ENCODE measurements at regions of chr10 and their contacts with region 1.

Region 1: GRCh38 chr10:62437696-62438095 is 63.5 kb downstream of the ZNF365 start:
- DNase-seq: no peak
- ATAC-seq: no peak
- H3K4me3 Mint-ChIP-seq: no peak overlapping the region
- H3K27ac Mint-ChIP-seq: no peak overlapping the region
- H3K4me1 Mint-ChIP-seq: peaks cover 19% of the 10 kb centered on the region
- H3K27me3 Mint-ChIP-seq: peaks cover 20% of the 10 kb centered on the region

Region 2: DNA sequence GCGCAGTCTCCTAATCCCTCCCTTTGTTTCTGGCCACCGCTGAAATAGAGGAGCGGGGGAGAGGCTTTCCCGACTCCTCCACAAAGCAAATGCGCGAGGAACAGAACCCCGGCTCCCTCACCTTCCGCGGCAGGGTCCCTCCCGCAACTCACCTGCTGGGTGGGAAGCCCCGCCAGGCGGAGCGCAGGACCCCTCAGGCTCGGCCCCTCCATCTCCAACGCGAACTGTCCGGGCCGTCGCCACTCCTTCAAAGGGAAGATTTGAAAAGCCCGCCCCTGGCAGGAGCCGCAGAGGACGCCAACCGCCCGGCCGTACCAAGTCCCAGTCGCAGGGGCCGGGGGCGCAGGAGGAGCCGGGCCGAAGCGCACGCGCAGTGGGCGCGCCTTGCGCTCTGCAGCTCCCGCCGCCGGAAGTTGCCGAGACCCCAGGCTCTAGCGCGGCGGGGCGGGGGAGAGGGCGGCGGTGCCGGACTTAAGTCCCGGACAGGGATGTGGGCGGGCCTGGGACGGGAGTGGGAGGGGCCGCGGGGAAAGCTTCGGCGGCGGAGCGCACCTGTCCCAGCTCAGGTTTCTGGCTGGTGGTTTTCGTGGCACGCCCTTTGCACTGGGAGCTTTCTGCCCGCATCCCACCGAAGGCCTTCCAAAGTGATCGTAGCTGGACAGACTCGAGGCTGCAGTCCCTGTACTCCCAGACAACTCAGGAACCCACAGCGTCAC is 169.1 kb before region 1 on chr10 and contains the start of gene RTKN2:
- CTCF ChIA-PET with region 1: interaction called, 8 read pairs
- POLR2A ChIA-PET with region 1: no interaction called
- intact Hi-C with region 1: loop called in 1 of 2 experiments (anchors 1 kb)
- DNase-seq: peak; percentile 83
- ATAC-seq: peak; percentile 88
- H3K4me3 Mint-ChIP-seq: peak within 1 kb of the TSS; percentile 82
- H3K27ac Mint-ChIP-seq: peak within 1 kb of the TSS; percentile 51
- H3K4me1 Mint-ChIP-seq: peaks cover 14% of the 10 kb centered on the region
- H3K27me3 Mint-ChIP-seq: peaks cover 31% of the 10 kb centered on the region
- total RNA-seq, gene RTKN2: 4.8 TPM

Region 3: DNA sequence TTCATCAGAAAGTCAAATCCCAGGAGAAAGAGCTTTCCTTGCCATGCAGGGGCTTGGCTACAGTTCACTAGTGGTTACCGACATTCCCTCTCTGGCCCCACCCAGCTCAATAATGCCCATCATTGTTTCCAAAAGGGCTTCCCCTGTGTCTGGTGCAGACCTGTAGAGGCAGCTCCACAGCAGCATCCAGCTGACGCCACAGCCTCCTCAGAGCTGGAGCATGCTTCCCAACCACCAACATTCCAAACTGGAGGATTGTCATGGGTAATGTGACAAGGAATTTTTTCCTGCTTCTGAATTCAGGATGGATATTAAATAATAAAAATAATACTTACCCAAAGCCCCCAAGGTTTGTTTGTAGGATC is 13.9 kb after region 1 on chr10:
- CTCF ChIA-PET with region 1: interaction called, 23 read pairs
- POLR2A ChIA-PET with region 1: no interaction called
- intact Hi-C with region 1: no loop called
- DNase-seq: no peak
- ATAC-seq: no peak
- H3K4me3 Mint-ChIP-seq: no peak overlapping the region
- H3K27ac Mint-ChIP-seq: no peak overlapping the region
- H3K4me1 Mint-ChIP-seq: no peaks in the 10 kb centered on the region
- H3K27me3 Mint-ChIP-seq: peaks cover 6% of the 10 kb centered on the region

Region 4: GRCh38 chr10:62528441-62528840 is 90.7 kb after region 1 on chr10:
- CTCF ChIA-PET with region 1: interaction called, 4 read pairs
- POLR2A ChIA-PET with region 1: no interaction called
- intact Hi-C with region 1: loop called in 1 of 2 experiments (anchors 5 kb)
- DNase-seq: no peak
- ATAC-seq: peak; percentile 99
- H3K4me3 Mint-ChIP-seq: no peak overlapping the region
- H3K27ac Mint-ChIP-seq: peak overlapping the region; percentile 68
- H3K4me1 Mint-ChIP-seq: peaks cover 37% of the 10 kb centered on the region
- H3K27me3 Mint-ChIP-seq: peaks cover 2% of the 10 kb centered on the region

Region 5: GRCh38 chr10:62594093-62594520 is 156.4 kb after region 1 on chr10:
- CTCF ChIA-PET with region 1: interaction called, 4 read pairs
- POLR2A ChIA-PET with region 1: no interaction called
- intact Hi-C with region 1: loop called (anchors 2 to 10 kb)
- DNase-seq: peak; percentile 71
- ATAC-seq: peak; percentile 84
- H3K4me3 Mint-ChIP-seq: no peak overlapping the region
- H3K27ac Mint-ChIP-seq: no peak overlapping the region
- H3K4me1 Mint-ChIP-seq: peaks cover 4% of the 10 kb centered on the region
- H3K27me3 Mint-ChIP-seq: peaks cover 14% of the 10 kb centered on the region

Region 6: GRCh38 chr10:62653254-62653653 is 215.6 kb after region 1 on chr10:
- CTCF ChIA-PET with region 1: no interaction called
- POLR2A ChIA-PET with region 1: no interaction called
- intact Hi-C with region 1: no loop called
- DNase-seq: no peak
- ATAC-seq: no peak
- H3K4me3 Mint-ChIP-seq: no peak overlapping the region
- H3K27ac Mint-ChIP-seq: no peak overlapping the region
- H3K4me1 Mint-ChIP-seq: peaks cover 22% of the 10 kb centered on the region
- H3K27me3 Mint-ChIP-seq: peaks cover 6% of the 10 kb centered on the region

Region 7: DNA sequence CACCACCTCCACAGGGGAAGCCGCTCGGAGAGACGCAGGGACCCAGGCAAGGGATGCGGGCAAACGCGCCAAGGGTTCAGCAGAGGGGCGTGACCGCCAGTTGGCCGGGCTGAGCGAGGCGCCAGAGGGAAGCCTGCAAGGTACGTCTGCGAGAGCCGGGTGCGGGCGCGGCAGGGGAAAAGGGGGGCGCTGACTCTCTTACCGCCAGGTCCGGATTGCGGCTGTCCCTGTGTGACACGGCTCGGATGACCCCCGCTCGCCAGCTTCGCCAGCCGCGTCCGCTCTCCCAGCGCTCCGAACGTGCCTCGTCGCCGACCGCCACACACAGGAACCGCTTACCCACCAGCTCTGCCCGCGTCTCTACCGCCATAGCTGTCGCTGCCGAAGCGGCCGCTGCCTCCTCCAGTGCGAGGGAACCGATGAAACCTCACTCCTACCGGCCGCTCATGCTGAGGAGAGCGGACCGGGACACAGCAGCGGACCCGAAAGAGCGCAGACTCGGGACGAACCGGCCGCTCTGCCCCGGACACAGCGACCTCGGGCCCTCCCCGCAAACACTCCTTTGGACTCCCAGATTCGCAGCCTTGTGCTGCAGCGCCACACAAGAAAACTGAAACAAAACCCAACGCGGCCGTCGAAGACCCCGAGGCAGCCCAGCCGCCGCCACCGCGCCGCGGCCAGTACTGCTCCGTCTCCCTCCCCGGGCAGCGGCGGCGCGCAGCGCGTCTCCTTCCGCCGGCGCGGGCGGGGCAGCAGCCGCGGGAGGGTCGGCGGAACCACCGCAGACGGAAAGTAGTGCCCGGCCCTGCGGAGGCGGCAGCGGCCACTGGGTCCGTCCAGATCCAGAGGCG is 1027.8 kb after region 1 on chr10 and contains the start of gene JMJD1C:
- CTCF ChIA-PET with region 1: no interaction called
- POLR2A ChIA-PET with region 1: no interaction called
- intact Hi-C with region 1: no loop called
- DNase-seq: peak; percentile 76
- ATAC-seq: peak; percentile 73
- H3K4me3 Mint-ChIP-seq: peak within 1 kb of the TSS; percentile 94
- H3K27ac Mint-ChIP-seq: peak within 1 kb of the TSS; percentile 72
- H3K4me1 Mint-ChIP-seq: peaks cover 23% of the 10 kb centered on the region
- H3K27me3 Mint-ChIP-seq: no peaks in the 10 kb centered on the region
- total RNA-seq, gene JMJD1C: 41.5 to 42.5 TPM

Measured in activated CD4-positive, alpha-beta T cell treated with anti-CD3 and anti-CD28 coated beads for 36 hours (primary cell).